ENCODE measurements at regions of chr9 and their contacts with region 1.

Region 1: DNA sequence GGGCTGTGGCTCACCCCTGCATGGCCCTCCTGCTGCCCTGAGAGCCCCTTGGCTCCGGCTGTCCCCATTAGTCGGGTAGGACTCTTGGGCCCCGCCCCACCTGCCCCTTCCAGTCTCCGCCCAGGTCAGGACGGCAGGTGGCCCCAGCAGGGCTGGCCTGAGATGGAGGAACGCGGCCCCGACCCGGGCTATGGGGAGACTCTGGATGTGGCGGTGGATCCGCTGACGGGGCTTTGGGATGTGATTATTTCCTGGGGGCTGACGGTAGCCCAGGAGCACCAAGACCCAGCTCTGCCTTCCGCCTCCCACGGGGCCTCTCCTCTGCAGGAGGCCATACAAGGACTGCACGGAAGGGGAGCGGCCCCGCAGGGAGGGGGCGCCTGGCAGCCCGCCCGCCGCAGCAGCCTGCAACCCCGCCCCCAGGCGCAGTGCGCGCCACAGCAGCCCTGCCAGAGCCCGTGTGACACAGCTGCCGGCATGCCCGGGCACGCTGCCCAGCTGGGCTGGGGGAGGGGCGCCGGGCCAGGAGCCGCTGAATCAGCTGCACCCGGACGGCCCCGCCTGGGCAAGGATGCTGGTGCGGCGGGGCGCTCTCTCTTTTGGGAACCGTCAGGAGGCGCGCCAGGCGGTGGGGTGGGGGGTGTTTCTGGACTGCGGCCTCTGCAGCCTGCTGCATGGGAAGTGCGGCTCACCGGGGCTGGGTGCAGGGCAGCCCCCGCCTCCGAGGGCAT is 9.2 kb downstream of the TMEM250 start:
- DNase-seq: peak; percentile 91
- CTCF ChIP-seq: no peak

Region 2: GRCh38 chr9:135969064-135969683 is 140.3 kb before region 1 on chr9:
- CTCF ChIA-PET with region 1: interaction called, 11 read pairs
- POLR2A ChIA-PET with region 1: no interaction called
- DNase-seq: no peak
- CTCF ChIP-seq: no peak

Region 3: GRCh38 chr9:136372561-136373299 is 263.2 kb after region 1 on chr9:
- CTCF ChIA-PET with region 1: no interaction called
- POLR2A ChIA-PET with region 1: no interaction called
- DNase-seq: peak; percentile 50
- CTCF ChIP-seq: peak; percentile 11